ENCODE measurements at regions of chr7 and their contacts with region 1.

Region 1: DNA sequence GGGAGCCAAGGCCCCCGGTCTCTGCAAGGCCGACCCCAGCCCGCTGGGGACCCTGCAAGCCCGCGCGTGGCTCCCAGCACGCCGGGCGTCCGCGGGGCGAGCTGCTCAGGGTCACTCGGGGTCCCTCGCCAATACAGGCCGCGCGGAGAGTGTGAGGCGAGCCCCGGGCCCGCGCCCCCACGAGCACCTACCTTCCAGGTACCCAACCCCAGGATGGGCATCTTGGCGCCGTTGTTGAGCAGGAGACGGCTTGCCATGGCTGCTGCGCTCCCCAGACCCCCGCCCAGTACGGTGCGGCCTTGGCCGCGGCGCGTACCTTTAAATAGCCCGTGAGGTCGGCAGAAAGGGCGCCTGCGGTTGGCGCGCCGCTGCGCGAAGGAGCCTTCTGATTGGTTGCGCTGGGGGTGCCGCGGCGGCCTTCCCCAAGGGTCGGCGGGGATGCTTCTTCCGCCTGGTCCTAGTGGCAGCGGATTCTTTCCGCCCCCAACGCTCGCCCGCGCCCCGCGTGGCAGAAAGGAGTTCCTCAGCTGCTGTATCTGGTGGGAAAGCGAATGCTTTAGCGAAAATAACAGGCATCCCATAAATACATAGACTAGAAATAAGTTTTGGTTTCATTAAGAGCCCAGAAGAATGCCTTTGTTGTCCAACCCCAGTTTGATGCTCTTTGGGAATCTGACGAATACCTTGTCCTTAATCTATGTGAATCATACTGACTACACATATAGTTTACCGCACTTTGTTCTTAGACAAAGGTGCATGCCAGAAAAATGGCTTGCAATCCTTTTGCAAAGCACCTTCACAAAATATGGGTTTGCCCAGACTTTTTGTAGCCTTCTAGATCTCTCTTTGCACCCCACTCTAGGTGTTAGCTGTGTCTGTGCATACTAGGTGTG is at the start of gene AKR1B1:
- DNase-seq: peak; percentile 77 to 93 (median 83)
- ATAC-seq: peak; percentile 88
- H3K4me3 ChIP-seq: peak within 1 kb of the TSS; percentile 77
- H3K4me3 Mint-ChIP-seq: peak within 1 kb of the TSS; percentile 90
- H3K27ac ChIP-seq: peak within 1 kb of the TSS; percentile 18 to 51
- H3K27ac Mint-ChIP-seq: peak within 1 kb of the TSS; percentile 70
- H3K4me1 ChIP-seq: peaks cover 28% of the 10 kb centered on the region
- H3K4me1 Mint-ChIP-seq: peaks cover 53% of the 10 kb centered on the region
- H3K27me3 ChIP-seq: no peaks in the 10 kb centered on the region
- H3K27me3 Mint-ChIP-seq: no peaks in the 10 kb centered on the region
- CTCF ChIP-seq: peak; percentile 63
- total RNA-seq, gene AKR1B1: 60.6 to 65.5 TPM

Region 2: DNA sequence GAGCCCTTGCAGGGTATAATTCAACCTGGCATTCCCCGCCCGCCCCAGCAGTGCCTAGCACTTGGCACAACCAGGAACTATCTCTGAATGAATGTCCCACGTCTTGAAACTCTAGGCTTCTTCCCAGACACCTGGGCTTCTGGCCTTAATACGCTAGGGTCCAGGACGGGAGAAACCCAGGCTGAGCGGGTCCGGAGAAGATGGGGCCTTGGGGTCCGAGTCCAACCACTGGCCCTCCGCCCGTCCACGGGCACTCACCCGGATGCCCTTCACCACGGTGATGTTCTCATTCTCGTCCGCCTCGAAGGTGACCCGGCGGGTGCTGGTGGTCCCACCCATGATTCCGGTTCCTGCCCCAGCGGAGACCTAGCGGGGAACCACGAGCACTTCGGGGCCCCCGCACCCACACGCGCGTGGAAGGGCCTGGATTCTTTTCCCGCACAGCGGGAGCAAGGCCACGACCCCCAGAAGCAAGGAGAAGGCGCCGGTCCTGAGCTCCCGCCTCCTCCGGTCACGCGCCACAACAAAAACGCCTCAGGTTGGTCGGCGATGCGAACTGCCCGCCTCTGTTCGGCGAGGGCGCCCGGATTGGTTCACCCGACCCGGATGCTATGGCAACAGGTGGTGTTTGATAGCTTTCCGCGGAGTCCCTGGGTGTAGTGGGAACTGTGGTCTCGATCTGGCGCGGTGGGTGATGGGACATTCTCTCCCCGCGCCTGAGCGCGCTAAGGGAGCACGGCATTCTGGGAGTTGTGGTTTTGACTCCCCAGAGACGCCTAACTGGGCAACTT is 1377.3 kb before region 1 on chr7 and contains the start of gene CHCHD3:
- CTCF ChIA-PET with region 1: no interaction called
- POLR2A ChIA-PET with region 1: no interaction called
- intact Hi-C with region 1: loop called in 1 of 2 experiments (anchors 5 kb)
- DNase-seq: peak; percentile 91 to 98 (median 94)
- ATAC-seq: peak; percentile 99
- H3K4me3 ChIP-seq: peak within 1 kb of the TSS; percentile 79
- H3K4me3 Mint-ChIP-seq: peak within 1 kb of the TSS; percentile 90
- H3K27ac ChIP-seq: peak within 1 kb of the TSS; percentile 86 to 92
- H3K27ac Mint-ChIP-seq: peak within 1 kb of the TSS; percentile 92
- H3K4me1 ChIP-seq: peaks cover 15% of the 10 kb centered on the region
- H3K4me1 Mint-ChIP-seq: peaks cover 33% of the 10 kb centered on the region
- H3K27me3 ChIP-seq: no peaks in the 10 kb centered on the region
- H3K27me3 Mint-ChIP-seq: no peaks in the 10 kb centered on the region
- CTCF ChIP-seq: no peak
- total RNA-seq, gene CHCHD3: 21.6 to 21.7 TPM

Region 3: GRCh38 chr7:134316539-134317344 is 142.3 kb before region 1 on chr7 and contains the start of gene SLC35B4:
- CTCF ChIA-PET with region 1: interaction called, 6 read pairs
- POLR2A ChIA-PET with region 1: interaction called, 4 read pairs
- intact Hi-C with region 1: loop called in 1 of 2 experiments (anchors 5 kb)
- DNase-seq: peak; percentile 90 to 97 (median 92)
- ATAC-seq: peak; percentile 96
- H3K4me3 ChIP-seq: peak within 1 kb of the TSS; percentile 98
- H3K4me3 Mint-ChIP-seq: peak within 1 kb of the TSS; percentile 93
- H3K27ac ChIP-seq: peak within 1 kb of the TSS; percentile 36 to 65
- H3K27ac Mint-ChIP-seq: peak within 1 kb of the TSS; percentile 77
- H3K4me1 ChIP-seq: peaks cover 15% of the 10 kb centered on the region
- H3K4me1 Mint-ChIP-seq: peaks cover 26% of the 10 kb centered on the region
- H3K27me3 ChIP-seq: no peaks in the 10 kb centered on the region
- H3K27me3 Mint-ChIP-seq: no peaks in the 10 kb centered on the region
- CTCF ChIP-seq: peak; percentile 27
- total RNA-seq, gene SLC35B4: 5.8 to 7.8 TPM

Region 4: GRCh38 chr7:134480736-134481135 is 21.7 kb after region 1 on chr7:
- CTCF ChIA-PET with region 1: interaction called, 10 read pairs
- POLR2A ChIA-PET with region 1: interaction called, 3 read pairs
- intact Hi-C with region 1: no loop called
- DNase-seq: no peak
- ATAC-seq: no peak
- H3K4me3 ChIP-seq: no peak overlapping the region
- H3K4me3 Mint-ChIP-seq: no peak overlapping the region
- H3K27ac ChIP-seq: no peak overlapping the region
- H3K27ac Mint-ChIP-seq: no peak overlapping the region
- H3K4me1 ChIP-seq: no peaks in the 10 kb centered on the region
- H3K4me1 Mint-ChIP-seq: no peaks in the 10 kb centered on the region
- H3K27me3 ChIP-seq: no peaks in the 10 kb centered on the region
- H3K27me3 Mint-ChIP-seq: peaks cover 26% of the 10 kb centered on the region
- CTCF ChIP-seq: no peak

Region 5: GRCh38 chr7:135170274-135170997 is 711.4 kb after region 1 on chr7 and contains the start of gene CYREN:
- CTCF ChIA-PET with region 1: interaction called, 3 read pairs
- POLR2A ChIA-PET with region 1: no interaction called
- intact Hi-C with region 1: loop called in 1 of 2 experiments (anchors 10 kb)
- DNase-seq: peak; percentile 75 to 95 (median 87)
- ATAC-seq: peak; percentile 77
- H3K4me3 ChIP-seq: peak within 1 kb of the TSS; percentile 82
- H3K4me3 Mint-ChIP-seq: peak within 1 kb of the TSS; percentile 91
- H3K27ac ChIP-seq: peak within 1 kb of the TSS; percentile 94
- H3K27ac Mint-ChIP-seq: peak within 1 kb of the TSS; percentile 94
- H3K4me1 ChIP-seq: peaks cover 47% of the 10 kb centered on the region
- H3K4me1 Mint-ChIP-seq: peaks cover 48% of the 10 kb centered on the region
- H3K27me3 ChIP-seq: no peaks in the 10 kb centered on the region
- H3K27me3 Mint-ChIP-seq: no peaks in the 10 kb centered on the region
- CTCF ChIP-seq: peak; percentile 76
- total RNA-seq, gene CYREN: 14.0 to 15.8 TPM